ENCODE measurements at regions of chr7 and their contacts with region 1.

Region 1: GRCh38 chr7:151245360-151246101 is 3.0 kb downstream of the SMARCD3 start:
- DNase-seq: no peak
- H3K4me3 ChIP-seq: peak overlapping the region; percentile 71 to 73
- H3K27ac ChIP-seq: peak overlapping the region; percentile 95 to 98
- H3K4me1 ChIP-seq: peaks cover 5 to 64% (median 56%) of the 10 kb centered on the region in 4 donors
- H3K27me3 ChIP-seq: no peaks in the 10 kb centered on the region
- CTCF ChIP-seq: peak; percentile 43 to 72

Region 2: GRCh38 chr7:151341357-151342101 is 96.0 kb after region 1 on chr7 and contains the start of gene NUB1:
- intact Hi-C with region 1: loop called (anchors 5 kb)
- DNase-seq: peak; percentile 90 to 95
- H3K4me3 ChIP-seq: peak within 1 kb of the TSS; percentile 84 to 97
- H3K27ac ChIP-seq: peak within 1 kb of the TSS; percentile 79 to 88
- H3K4me1 ChIP-seq: peaks cover 0 to 35% (median 15%) of the 10 kb centered on the region in 4 donors
- H3K27me3 ChIP-seq: no peaks in the 10 kb centered on the region
- CTCF ChIP-seq: no peak

Measured in tibial artery (tissue), 4 donors.